Mammary epithelial cell (primary cell): ENCODE measurements at regions of chr2 and their contacts with region 1.

Region 1: DNA sequence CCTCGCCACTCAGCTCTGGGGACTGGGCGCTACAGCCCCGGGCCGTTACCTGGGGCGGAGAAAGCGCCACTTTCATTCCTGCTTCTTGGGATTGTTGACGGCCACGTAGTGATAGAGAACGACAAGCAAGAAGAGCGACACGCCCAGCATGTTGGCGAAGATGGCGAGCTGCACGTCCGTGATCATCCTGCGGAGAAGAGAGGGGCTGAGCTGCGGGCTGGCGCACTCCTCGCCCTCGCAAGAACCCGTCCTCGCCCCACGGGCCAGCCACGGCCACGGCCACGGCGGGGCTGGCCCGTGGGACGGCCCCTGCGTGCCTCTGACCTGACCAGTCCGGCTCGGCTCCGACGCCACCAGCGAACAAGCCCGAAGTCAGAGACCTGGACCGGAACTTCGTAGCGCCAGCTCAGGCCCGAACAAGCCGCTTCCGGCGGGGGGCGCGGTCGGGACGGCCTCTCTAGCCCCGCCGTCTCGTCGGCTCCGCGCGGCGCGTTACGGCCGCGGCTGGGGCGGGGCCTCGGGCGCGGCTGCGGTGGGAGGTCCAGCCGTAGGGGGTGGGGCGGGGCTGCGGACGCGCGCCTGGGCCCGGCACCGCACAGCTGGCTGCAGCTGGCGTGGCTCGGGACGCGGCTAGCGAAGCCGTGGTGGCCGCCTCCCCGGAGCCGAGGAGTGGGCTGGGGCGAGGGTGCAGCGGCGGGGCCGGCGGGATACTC is at the start of gene OST4:
- DNase-seq: peak; percentile 90
- H3K4me3 ChIP-seq: peak within 1 kb of the TSS; percentile 79 to 98 (median 91)
- H3K27ac ChIP-seq: peak within 1 kb of the TSS; percentile 76
- H3K4me1 ChIP-seq: peaks cover 16% of the 10 kb centered on the region
- H3K27me3 ChIP-seq: no peaks in the 10 kb centered on the region
- CTCF ChIP-seq: no peak
- total RNA-seq, gene OST4: 121 to 313 TPM

Region 2: DNA sequence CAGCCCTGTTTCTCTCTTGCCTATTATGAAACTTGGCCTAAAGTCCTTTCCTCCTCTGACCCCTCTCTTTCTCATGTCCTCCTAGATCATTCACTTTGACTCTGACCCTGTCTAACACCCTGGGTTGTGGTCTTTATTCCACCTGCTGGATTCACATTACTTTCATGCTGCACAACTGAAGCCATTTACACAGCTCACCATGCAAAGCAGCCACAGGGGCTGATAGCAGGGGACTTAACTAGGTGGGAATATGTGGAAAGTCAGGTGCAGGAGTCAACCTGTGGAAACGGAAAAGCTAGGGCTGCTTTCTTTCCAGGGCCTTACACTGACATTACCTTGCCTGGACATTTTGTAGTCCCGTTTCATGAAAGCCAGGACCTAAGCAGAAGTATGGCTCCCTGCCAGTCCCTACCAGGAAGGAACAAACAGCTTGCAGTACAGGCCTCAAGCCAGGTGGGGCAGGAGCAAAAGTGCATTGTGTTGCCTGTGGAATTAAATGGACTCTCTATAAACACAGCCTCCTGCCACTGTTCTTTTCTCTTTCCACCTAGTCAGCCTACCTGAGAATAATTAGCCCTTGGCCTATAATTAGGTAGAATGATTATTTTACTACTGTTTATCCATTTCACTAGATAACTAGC is 89.2 kb before region 1 on chr2:
- CTCF ChIA-PET with region 1: no interaction called
- dilution Hi-C with region 1: no loop called
- in situ Hi-C with region 1: no loop called
- intact Hi-C with region 1: no loop called
- DNase-seq: peak; percentile 33
- H3K4me3 ChIP-seq: no peak overlapping the region
- H3K27ac ChIP-seq: no peak overlapping the region
- H3K4me1 ChIP-seq: peaks cover 6% of the 10 kb centered on the region
- H3K27me3 ChIP-seq: no peaks in the 10 kb centered on the region
- CTCF ChIP-seq: peak; percentile 49 to 59

Region 3: DNA sequence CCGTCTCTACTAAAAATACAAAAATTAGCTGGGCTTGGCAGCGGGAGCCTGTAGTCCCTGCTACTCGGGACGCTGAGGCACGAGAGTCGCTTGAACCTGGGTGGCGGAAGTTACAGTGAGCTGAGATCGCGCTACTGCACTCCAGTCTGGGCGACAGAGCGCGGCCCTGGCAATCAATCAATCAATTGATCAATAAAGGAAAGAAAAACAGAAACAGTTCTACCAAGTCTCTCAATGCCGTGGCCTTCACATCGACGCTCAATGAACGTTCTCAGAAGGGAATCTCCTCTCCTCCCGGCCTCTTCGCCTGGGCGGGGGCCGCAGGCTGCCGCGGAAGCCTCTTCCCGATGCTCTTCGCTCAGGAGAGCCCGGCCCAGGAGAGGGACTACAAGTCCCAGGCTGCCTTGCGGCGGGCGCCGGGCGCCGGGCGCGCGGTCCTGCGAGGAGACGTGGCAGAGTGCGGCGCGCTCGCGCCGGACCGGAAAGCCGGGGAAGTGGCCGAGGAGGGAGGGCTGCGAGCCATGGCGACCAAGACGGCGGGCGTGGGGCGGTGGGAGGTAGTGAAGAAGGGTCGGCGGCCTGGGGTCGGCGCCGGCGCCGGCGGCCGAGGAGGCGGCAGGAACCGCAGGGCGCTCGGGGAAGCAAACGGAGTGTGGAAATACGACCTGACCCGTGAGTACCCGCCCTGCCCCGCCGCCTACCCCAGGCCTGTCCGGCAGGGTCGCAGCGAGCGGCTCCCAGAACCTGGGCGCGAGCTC is 38.8 kb before region 1 on chr2 and contains the start of gene TMEM214:
- CTCF ChIA-PET with region 1: no interaction called
- dilution Hi-C with region 1: no loop called
- in situ Hi-C with region 1: no loop called
- intact Hi-C with region 1: no loop called
- DNase-seq: peak; percentile 80
- H3K4me3 ChIP-seq: peak within 1 kb of the TSS; percentile 70 to 100 (median 96)
- H3K27ac ChIP-seq: peak within 1 kb of the TSS; percentile 71
- H3K4me1 ChIP-seq: peaks cover 11% of the 10 kb centered on the region
- H3K27me3 ChIP-seq: no peaks in the 10 kb centered on the region
- CTCF ChIP-seq: no peak
- total RNA-seq, gene TMEM214: 27.3 to 90.7 TPM

Region 4: DNA sequence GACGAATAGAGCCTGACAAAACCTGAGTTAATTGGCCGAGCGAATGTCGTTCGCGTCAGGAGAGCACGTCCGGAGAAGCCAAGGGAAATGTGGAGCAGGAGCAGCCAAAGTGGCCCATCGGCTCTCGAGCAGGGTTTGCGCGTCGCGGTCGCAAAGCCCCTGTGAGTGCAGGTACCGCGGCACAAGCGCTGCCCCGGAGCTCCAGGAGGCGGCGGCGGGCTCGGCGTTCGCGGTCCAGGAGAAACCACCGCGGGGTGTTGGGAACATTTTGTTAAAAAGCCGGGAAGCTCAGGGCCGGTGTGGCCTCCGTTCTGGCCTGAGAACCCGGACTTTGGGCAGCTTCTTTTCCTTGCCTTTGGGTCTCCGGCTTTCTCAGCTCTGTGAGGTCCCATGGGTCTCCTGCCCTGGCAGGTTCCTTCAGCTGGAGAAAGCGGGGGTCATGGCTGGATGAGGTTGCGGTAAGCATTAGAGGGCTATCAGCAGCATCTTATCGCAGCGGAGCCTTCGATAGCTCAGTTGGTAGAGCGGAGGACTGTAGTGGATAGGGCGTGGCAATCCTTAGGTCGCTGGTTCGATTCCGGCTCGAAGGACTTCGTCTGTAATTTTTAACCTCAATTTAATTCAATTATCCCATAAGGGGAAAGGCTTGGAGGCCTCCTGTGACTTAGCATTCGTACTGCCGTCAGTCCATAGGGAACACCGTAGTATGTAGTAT is 21.0 kb before region 1 on chr2:
- CTCF ChIA-PET with region 1: no interaction called
- dilution Hi-C with region 1: no loop called
- in situ Hi-C with region 1: no loop called
- intact Hi-C with region 1: loop called (anchors 1 kb)
- DNase-seq: peak; percentile 91
- H3K4me3 ChIP-seq: peak overlapping the region; percentile 59 to 99 (median 74)
- H3K27ac ChIP-seq: peak overlapping the region; percentile 37
- H3K4me1 ChIP-seq: peaks cover 15% of the 10 kb centered on the region
- H3K27me3 ChIP-seq: no peaks in the 10 kb centered on the region
- CTCF ChIP-seq: peak in 1 of 2 donors; percentile 51